Activated CD4-positive, alpha-beta memory T cell treated with anti-CD3 and anti-CD28 coated beads for 36 hours (primary cell): ENCODE measurements at regions of chr11 and their contacts with region 1.

Region 1: DNA sequence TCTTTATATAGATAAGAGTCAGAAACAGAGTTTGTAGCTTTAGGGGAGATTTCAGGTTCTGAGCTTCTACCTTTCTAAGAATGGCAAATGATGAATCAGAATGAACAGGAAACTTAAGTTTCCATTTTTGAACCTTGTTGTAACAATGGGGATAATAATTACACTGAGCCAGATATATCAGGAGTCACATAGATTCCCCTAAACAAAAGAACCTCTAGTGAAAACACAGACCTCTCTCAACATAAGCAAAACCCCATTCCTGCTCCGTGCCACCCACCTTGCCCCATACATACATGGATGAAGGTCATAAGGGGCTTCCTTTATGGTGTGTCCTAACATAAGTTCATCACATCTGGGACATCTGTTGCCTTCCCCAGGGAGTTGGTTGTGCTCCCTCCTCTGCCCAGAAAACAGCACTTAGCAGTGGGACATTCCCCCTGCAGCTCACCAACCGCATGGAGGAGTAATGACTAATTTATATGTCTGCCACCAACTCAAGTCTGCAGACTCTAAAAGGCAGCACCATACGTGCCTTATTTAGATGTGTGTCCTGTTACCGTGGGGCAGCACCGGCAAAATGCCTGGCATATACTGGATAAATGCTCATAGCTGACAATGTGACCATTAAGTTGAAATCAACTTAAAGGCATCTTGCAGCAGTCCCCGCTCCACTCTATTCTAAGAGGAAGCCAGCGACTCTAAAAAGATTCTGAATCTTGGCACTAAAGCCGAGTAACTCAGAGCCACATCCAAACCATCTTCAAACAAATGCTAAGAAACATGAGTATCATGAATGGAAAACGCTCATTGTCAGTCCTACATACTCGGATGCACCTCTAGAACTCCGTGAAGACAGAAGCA is 8.0 kb downstream of the JAML start:
- DNase-seq: peak; percentile 78
- H3K4me3 Mint-ChIP-seq: peak overlapping the region; percentile 81
- H3K27ac Mint-ChIP-seq: peak overlapping the region; percentile 97
- H3K4me1 Mint-ChIP-seq: peaks cover 97% of the 10 kb centered on the region
- H3K27me3 Mint-ChIP-seq: no peaks in the 10 kb centered on the region

Region 2: GRCh38 chr11:118206391-118207031 is 10.3 kb before region 1 on chr11:
- CTCF ChIA-PET with region 1: interaction called, 12 read pairs
- POLR2A ChIA-PET with region 1: interaction called, 83 read pairs
- intact Hi-C with region 1: loop called (anchors 1 kb)
- DNase-seq: no peak
- H3K4me3 Mint-ChIP-seq: peak overlapping the region; percentile 22
- H3K27ac Mint-ChIP-seq: no peak overlapping the region
- H3K4me1 Mint-ChIP-seq: peaks cover 53% of the 10 kb centered on the region
- H3K27me3 Mint-ChIP-seq: no peaks in the 10 kb centered on the region

Region 3: DNA sequence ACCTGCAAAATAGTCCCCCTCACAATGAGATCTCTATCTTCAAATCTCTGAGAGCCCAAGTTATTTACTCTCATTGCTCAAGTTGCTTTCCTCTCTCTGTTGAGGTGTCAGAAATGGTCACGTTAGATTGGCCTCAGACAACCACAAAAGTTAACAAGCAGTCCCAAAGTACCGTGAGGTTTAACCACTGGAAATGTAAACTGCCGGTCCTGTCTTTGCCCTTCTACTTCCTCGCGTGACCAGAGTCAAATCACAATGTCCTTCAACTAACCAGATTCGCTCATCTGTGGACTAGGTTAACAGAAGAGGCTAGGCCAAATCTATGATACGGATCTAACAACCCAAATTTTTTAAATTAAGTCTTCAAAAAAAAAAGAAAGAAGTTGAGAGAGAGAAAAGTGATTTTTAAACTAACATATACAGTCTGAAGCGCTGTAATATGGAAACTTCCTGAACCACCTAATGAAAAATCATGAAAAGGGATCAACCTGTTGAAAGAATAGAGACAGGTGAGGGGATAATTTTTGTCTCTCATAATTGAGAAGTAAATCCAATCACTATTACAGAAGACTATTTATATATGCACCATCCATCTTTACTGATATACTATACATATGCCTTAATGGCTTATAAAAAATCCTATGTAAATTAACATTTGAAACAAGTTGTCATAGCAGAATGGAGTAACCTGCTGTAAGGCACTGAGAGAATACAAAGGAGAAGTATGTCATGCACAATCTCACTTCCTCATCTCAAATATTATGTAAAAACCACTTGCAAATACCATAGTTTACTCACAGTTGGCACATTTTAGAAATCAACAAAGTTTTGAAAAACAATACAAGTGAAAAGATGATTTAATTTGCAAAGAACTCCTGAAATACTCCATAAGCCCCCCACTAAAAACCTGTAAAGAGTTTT is 11.3 kb after region 1 on chr11:
- CTCF ChIA-PET with region 1: interaction called, 14 read pairs
- POLR2A ChIA-PET with region 1: interaction called, 81 read pairs
- intact Hi-C with region 1: loop called (anchors 1 kb)
- DNase-seq: peak; percentile 43
- H3K4me3 Mint-ChIP-seq: peak overlapping the region; percentile 45
- H3K27ac Mint-ChIP-seq: no peak overlapping the region
- H3K4me1 Mint-ChIP-seq: peaks cover 47% of the 10 kb centered on the region
- H3K27me3 Mint-ChIP-seq: no peaks in the 10 kb centered on the region

Region 4: DNA sequence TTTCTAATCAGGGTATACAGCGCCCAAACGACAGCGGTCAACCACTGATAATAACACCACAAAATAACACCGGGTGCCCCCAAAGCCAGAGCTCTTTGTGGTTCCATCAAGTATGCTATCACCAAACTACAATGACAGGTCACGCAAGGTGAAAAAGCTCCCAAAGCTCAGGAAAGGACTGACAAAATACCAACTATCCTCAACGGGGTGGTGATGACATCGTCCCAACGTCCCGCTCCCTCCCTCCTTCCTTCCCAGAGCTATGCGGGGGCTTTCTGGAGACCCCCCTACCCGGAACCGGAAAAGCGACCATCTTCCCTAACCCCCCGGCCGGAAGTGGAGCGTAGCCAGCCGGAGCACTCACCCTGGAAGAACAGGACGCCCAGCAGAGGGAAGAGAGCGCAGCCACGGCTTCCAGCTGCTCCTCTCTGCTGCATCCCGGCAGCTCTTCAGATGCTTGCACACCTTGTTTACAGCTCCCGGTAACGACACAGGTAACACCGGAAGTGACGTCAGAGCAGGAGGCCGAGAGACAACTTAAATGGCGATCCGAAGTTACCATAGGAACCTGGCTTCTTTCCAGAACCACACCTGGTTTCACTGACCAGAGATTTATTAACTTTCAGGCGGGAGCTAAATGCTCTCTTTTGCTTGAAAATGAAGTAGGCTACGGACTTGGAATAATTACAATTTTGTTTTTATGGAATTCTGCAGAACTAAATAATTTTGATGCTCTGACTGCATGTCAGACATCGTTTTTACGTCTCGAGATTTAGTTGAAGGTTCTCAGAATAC is 35.2 kb after region 1 on chr11 and contains the start of gene MPZL3:
- CTCF ChIA-PET with region 1: interaction called, 5 read pairs
- POLR2A ChIA-PET with region 1: interaction called, 25 read pairs
- intact Hi-C with region 1: loop called (anchors 1 kb)
- DNase-seq: peak; percentile 89
- H3K4me3 Mint-ChIP-seq: peak within 1 kb of the TSS; percentile 99
- H3K27ac Mint-ChIP-seq: peak within 1 kb of the TSS; percentile 97
- H3K4me1 Mint-ChIP-seq: peaks cover 37% of the 10 kb centered on the region
- H3K27me3 Mint-ChIP-seq: no peaks in the 10 kb centered on the region
- total RNA-seq, gene MPZL3: 47.3 to 49.0 TPM

Region 5: GRCh38 chr11:118338637-118339061 is 121.8 kb after region 1 on chr11:
- CTCF ChIA-PET with region 1: interaction called, 3 read pairs
- POLR2A ChIA-PET with region 1: interaction called, 5 read pairs
- intact Hi-C with region 1: loop called (anchors 2 kb)
- DNase-seq: peak; percentile 95
- H3K4me3 Mint-ChIP-seq: peak overlapping the region; percentile 82
- H3K27ac Mint-ChIP-seq: peak overlapping the region; percentile 98
- H3K4me1 Mint-ChIP-seq: peaks cover 48% of the 10 kb centered on the region
- H3K27me3 Mint-ChIP-seq: no peaks in the 10 kb centered on the region